CD4-positive, alpha-beta T cell (primary cell): ENCODE measurements at regions of chr10 and their contacts with region 1.

Region 1: GRCh38 chr10:60704480-60704879 is 73.8 kb upstream of the CDK1 start:
- DNase-seq: no peak
- ATAC-seq: no peak
- H3K4me3 ChIP-seq: no peak overlapping the region
- H3K4me3 Mint-ChIP-seq: no peak overlapping the region
- H3K27ac ChIP-seq: no peak overlapping the region
- H3K27ac Mint-ChIP-seq: peak overlapping the region; percentile 73
- H3K4me1 ChIP-seq: peaks cover 8% of the 10 kb centered on the region
- H3K4me1 Mint-ChIP-seq: peaks cover 60% of the 10 kb centered on the region
- H3K27me3 ChIP-seq: no peaks in the 10 kb centered on the region
- H3K27me3 Mint-ChIP-seq: no peaks in the 10 kb centered on the region
- CTCF ChIP-seq: no peak

Region 2: DNA sequence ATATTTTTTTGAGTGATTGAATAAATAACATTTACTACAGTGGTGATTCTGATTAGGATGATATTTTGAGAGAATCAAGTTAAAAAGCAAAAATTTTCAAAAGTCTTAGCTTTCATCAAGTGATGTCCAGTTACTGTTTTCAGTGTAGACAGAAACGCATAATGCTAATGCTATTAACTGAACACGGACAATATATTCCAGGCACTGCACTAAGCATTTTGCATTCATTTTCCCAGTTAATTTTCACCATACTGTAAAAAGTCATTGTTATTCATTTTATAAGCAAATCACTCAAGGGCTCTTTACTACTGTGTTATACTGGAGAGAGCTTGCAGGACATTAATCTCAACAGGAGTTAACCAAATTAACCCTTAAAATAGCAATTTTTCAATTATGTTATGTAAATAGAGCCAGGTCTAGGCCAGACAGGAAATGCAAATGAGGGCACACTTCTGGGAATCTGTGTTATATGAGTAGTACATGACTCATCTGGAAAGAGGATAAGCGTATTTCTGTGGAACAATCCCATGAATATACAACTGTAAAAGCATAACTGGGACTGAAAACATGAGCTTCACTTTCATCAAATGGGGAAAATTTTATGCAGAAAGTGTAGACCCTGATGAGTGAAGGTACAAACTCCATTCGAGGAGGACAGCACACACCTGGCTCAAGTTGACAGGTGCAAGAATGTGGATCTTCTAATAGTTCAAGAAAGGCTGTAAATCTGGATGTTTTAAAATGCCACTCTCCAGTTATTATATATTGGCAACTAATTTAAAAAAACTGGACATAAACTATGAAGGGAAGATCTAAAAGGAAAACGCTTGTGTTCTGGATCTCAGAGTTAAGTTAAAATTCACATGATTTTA is 390.2 kb before region 1 on chr10:
- CTCF ChIA-PET with region 1: no interaction called
- POLR2A ChIA-PET with region 1: no interaction called
- intact Hi-C with region 1: no loop called
- DNase-seq: peak in 1 of 14 experiments; percentile 5
- ATAC-seq: no peak
- H3K4me3 ChIP-seq: no peak overlapping the region
- H3K4me3 Mint-ChIP-seq: no peak overlapping the region
- H3K27ac ChIP-seq: no peak overlapping the region
- H3K27ac Mint-ChIP-seq: no peak overlapping the region
- H3K4me1 ChIP-seq: peaks cover 3% of the 10 kb centered on the region
- H3K4me1 Mint-ChIP-seq: peaks cover 10% of the 10 kb centered on the region
- H3K27me3 ChIP-seq: no peaks in the 10 kb centered on the region
- H3K27me3 Mint-ChIP-seq: no peaks in the 10 kb centered on the region
- CTCF ChIP-seq: no peak

Region 3: GRCh38 chr10:60717852-60718251 is 13.4 kb after region 1 on chr10:
- CTCF ChIA-PET with region 1: interaction called, 5 read pairs
- POLR2A ChIA-PET with region 1: interaction called, 11 read pairs
- intact Hi-C with region 1: no loop called
- DNase-seq: peak in 1 of 14 experiments; percentile 28
- ATAC-seq: peak; percentile 52
- H3K4me3 ChIP-seq: no peak overlapping the region
- H3K4me3 Mint-ChIP-seq: no peak overlapping the region
- H3K27ac ChIP-seq: no peak overlapping the region
- H3K27ac Mint-ChIP-seq: no peak overlapping the region
- H3K4me1 ChIP-seq: peaks cover 11% of the 10 kb centered on the region
- H3K4me1 Mint-ChIP-seq: peaks cover 79% of the 10 kb centered on the region
- H3K27me3 ChIP-seq: no peaks in the 10 kb centered on the region
- H3K27me3 Mint-ChIP-seq: no peaks in the 10 kb centered on the region
- CTCF ChIP-seq: no peak

Region 4: GRCh38 chr10:60733189-60733822 is 28.8 kb after region 1 on chr10:
- CTCF ChIA-PET with region 1: no interaction called
- POLR2A ChIA-PET with region 1: interaction called, 10 read pairs
- intact Hi-C with region 1: loop called in 1 of 2 experiments (anchors 2 kb)
- DNase-seq: peak; percentile 25 to 79 (median 50)
- ATAC-seq: peak; percentile 66
- H3K4me3 ChIP-seq: peak overlapping the region; percentile 70
- H3K4me3 Mint-ChIP-seq: peak overlapping the region; percentile 82
- H3K27ac ChIP-seq: peak overlapping the region; percentile 49 to 83
- H3K27ac Mint-ChIP-seq: peak overlapping the region; percentile 99
- H3K4me1 ChIP-seq: peaks cover 20% of the 10 kb centered on the region
- H3K4me1 Mint-ChIP-seq: peaks cover 49% of the 10 kb centered on the region
- H3K27me3 ChIP-seq: no peaks in the 10 kb centered on the region
- H3K27me3 Mint-ChIP-seq: no peaks in the 10 kb centered on the region
- CTCF ChIP-seq: peak; percentile 57

Region 5: GRCh38 chr10:60789340-60789739 is 84.9 kb after region 1 on chr10:
- CTCF ChIA-PET with region 1: no interaction called
- POLR2A ChIA-PET with region 1: no interaction called
- intact Hi-C with region 1: no loop called
- DNase-seq: no peak
- ATAC-seq: no peak
- H3K4me3 ChIP-seq: no peak overlapping the region
- H3K4me3 Mint-ChIP-seq: no peak overlapping the region
- H3K27ac ChIP-seq: no peak overlapping the region
- H3K27ac Mint-ChIP-seq: no peak overlapping the region
- H3K4me1 ChIP-seq: peaks cover 2% of the 10 kb centered on the region
- H3K4me1 Mint-ChIP-seq: peaks cover 32% of the 10 kb centered on the region
- H3K27me3 ChIP-seq: no peaks in the 10 kb centered on the region
- H3K27me3 Mint-ChIP-seq: no peaks in the 10 kb centered on the region
- CTCF ChIP-seq: no peak

Region 6: DNA sequence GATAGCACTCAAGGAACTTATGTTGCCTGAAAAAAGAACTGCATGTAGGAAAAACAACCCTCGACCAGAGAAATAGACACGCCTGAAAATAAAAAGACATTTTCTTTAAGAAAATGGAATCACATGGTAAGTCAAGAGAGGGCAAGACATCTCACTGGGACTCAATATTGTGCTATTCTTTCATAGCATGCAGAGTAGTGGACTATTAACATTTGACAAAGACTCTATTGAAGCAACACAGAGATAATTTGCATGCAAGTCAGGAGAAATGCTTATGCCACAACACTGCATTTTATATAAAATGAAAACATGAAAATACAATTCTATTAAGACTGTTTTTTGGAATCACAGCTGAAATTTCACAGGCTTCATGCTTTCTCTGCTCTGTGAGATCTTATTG is 317.4 kb after region 1 on chr10:
- CTCF ChIA-PET with region 1: no interaction called
- POLR2A ChIA-PET with region 1: no interaction called
- intact Hi-C with region 1: no loop called
- DNase-seq: no peak
- ATAC-seq: no peak
- H3K4me3 ChIP-seq: no peak overlapping the region
- H3K4me3 Mint-ChIP-seq: no peak overlapping the region
- H3K27ac ChIP-seq: no peak overlapping the region
- H3K27ac Mint-ChIP-seq: no peak overlapping the region
- H3K4me1 ChIP-seq: no peaks in the 10 kb centered on the region
- H3K4me1 Mint-ChIP-seq: no peaks in the 10 kb centered on the region
- H3K27me3 ChIP-seq: peaks cover 3 to 4% of the 10 kb centered on the region in 2 experiments
- H3K27me3 Mint-ChIP-seq: peaks cover 15% of the 10 kb centered on the region
- CTCF ChIP-seq: no peak